ENCODE measurements at regions of chr2 and their contacts with region 1.

Region 1: GRCh38 chr2:133886735-133887660 is 318.7 kb upstream of the NCKAP5 start:
- DNase-seq: peak; percentile 14 to 68 (median 36)
- ATAC-seq: no peak
- H3K4me3 ChIP-seq: no peak overlapping the region
- H3K4me3 Mint-ChIP-seq: no peak overlapping the region
- H3K27ac ChIP-seq: no peak overlapping the region
- H3K27ac Mint-ChIP-seq: no peak overlapping the region
- H3K4me1 ChIP-seq: peaks cover 4% of the 10 kb centered on the region
- H3K4me1 Mint-ChIP-seq: no peaks in the 10 kb centered on the region
- H3K27me3 ChIP-seq: no peaks in the 10 kb centered on the region
- H3K27me3 Mint-ChIP-seq: peaks cover 23% of the 10 kb centered on the region
- CTCF ChIP-seq: peak; percentile 54

Region 2: GRCh38 chr2:134411828-134412638 is 525.0 kb after region 1 on chr2:
- CTCF ChIA-PET with region 1: interaction called, 9 read pairs
- POLR2A ChIA-PET with region 1: interaction called, 4 read pairs
- intact Hi-C with region 1: loop called (anchors 1 to 2 kb)
- DNase-seq: peak; percentile 51 to 84 (median 62)
- ATAC-seq: peak; percentile 97
- H3K4me3 ChIP-seq: no peak overlapping the region
- H3K4me3 Mint-ChIP-seq: no peak overlapping the region
- H3K27ac ChIP-seq: no peak overlapping the region
- H3K27ac Mint-ChIP-seq: no peak overlapping the region
- H3K4me1 ChIP-seq: peaks cover 34% of the 10 kb centered on the region
- H3K4me1 Mint-ChIP-seq: peaks cover 54% of the 10 kb centered on the region
- H3K27me3 ChIP-seq: no peaks in the 10 kb centered on the region
- H3K27me3 Mint-ChIP-seq: no peaks in the 10 kb centered on the region
- CTCF ChIP-seq: peak; percentile 62

Region 3: DNA sequence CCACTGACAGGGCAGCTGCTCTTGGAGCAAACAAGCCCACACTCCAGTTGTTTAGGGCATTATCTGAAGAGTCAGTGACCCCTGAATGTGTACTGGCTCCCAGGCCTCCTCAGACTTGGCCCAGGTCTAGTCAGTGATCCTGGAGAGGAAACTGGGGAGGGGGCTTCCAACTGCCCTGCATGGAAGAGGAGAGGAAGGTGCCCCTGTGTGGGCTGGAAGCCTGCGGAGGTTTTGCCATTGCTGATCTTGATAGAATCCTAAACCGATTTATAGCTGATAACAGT is 564.3 kb after region 1 on chr2:
- CTCF ChIA-PET with region 1: no interaction called
- POLR2A ChIA-PET with region 1: no interaction called
- intact Hi-C with region 1: loop called in 1 of 2 experiments (anchors 2 kb)
- DNase-seq: no peak
- ATAC-seq: no peak
- H3K4me3 ChIP-seq: no peak overlapping the region
- H3K4me3 Mint-ChIP-seq: no peak overlapping the region
- H3K27ac ChIP-seq: no peak overlapping the region
- H3K27ac Mint-ChIP-seq: peak overlapping the region; percentile 33
- H3K4me1 ChIP-seq: no peaks in the 10 kb centered on the region
- H3K4me1 Mint-ChIP-seq: no peaks in the 10 kb centered on the region
- H3K27me3 ChIP-seq: no peaks in the 10 kb centered on the region
- H3K27me3 Mint-ChIP-seq: no peaks in the 10 kb centered on the region
- CTCF ChIP-seq: no peak

Region 4: GRCh38 chr2:134549104-134549503 is 662.1 kb after region 1 on chr2:
- CTCF ChIA-PET with region 1: no interaction called
- POLR2A ChIA-PET with region 1: no interaction called
- intact Hi-C with region 1: no loop called
- DNase-seq: no peak
- ATAC-seq: no peak
- H3K4me3 ChIP-seq: no peak overlapping the region
- H3K4me3 Mint-ChIP-seq: no peak overlapping the region
- H3K27ac ChIP-seq: no peak overlapping the region
- H3K27ac Mint-ChIP-seq: no peak overlapping the region
- H3K4me1 ChIP-seq: no peaks in the 10 kb centered on the region
- H3K4me1 Mint-ChIP-seq: no peaks in the 10 kb centered on the region
- H3K27me3 ChIP-seq: peaks cover 0 to 12% of the 10 kb centered on the region in 2 experiments
- H3K27me3 Mint-ChIP-seq: peaks cover 19% of the 10 kb centered on the region
- CTCF ChIP-seq: no peak